ENCODE measurements at regions of chr11 and their contacts with region 1.

Region 1: DNA sequence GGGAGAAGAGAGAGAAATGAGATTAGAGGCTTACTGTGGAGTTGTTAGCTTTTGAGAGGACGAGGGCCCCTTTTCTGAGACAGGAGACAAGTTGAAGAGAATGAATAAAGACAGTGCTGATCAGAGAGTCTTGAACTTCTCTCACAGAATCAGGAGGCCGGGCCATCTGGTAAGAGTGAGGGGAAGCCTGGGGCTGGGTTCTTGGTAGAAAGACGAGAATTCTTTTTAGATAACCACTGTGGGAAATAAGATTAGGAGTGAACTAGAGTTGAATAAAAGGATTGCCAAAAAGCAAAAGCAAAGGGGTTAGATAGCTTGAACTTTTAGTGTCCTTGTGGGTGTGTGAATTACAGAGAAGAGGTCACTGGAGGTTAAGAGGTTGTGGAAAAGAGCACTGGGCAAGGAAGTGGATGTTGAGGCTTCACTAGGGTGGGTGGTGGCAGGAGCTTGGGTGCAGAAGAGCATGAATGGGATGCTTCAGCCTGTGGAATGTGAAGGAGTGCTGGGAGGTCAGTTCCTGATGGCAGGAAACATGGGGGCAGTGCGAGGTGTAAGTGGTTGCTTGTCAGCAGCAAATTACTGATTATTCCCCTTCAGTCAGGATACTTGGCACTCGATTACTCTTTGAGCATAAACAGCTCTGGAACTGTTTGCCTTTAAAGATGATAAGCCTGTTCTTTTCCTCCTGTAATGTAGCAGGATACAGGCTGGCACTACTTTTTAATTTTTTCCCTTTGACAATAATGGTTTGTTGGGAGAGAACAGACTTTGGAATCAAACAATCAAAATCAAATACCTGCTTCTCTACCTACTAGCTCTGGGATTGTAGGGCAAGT is 98.3 kb downstream of the ARHGAP42 start:
- DNase-seq: no peak
- ATAC-seq: peak; percentile 27; the same call in 1 of the 2 replicates
- H3K4me3 ChIP-seq: no peak overlapping the region
- H3K27ac ChIP-seq: no peak overlapping the region
- H3K4me1 ChIP-seq: 0 out of 2 replicates have a peak, but pooled peaks cover 1% of the 10 kb centered on the region
- H3K27me3 ChIP-seq: no peaks in the 10 kb centered on the region
- CTCF ChIP-seq: no peak
- POLR2A ChIP-seq: no peak
- RAD21 ChIP-seq: no peak

Region 2: DNA sequence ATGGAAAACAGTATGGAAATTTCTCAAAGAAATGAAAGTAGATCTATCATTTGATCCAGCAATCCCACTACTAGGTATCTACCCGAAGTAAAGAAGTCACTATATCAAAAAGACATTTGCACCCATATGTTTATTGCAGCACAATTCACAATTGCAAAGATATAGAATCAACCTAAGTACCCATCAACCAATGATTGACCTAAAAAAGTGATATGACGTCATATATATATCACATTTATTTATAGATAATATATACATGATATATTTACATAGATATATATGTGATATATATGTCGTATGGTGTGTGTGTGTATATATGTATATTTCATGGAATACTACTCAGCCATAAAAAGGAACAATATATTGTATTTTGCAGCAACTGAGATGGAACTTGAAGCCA is 286.6 kb before region 1 on chr11:
- CTCF ChIA-PET with region 1: no interaction called
- POLR2A ChIA-PET with region 1: no interaction called
- dilution Hi-C with region 1: no loop called
- in situ Hi-C with region 1: no loop called
- intact Hi-C with region 1: no loop called
- DNase-seq: no peak
- ATAC-seq: no peak
- H3K4me3 ChIP-seq: no peak overlapping the region
- H3K27ac ChIP-seq: no peak overlapping the region
- H3K4me1 ChIP-seq: no peaks in the 10 kb centered on the region
- H3K27me3 ChIP-seq: no peaks in the 10 kb centered on the region
- CTCF ChIP-seq: no peak
- POLR2A ChIP-seq: no peak
- RAD21 ChIP-seq: no peak

Region 3: GRCh38 chr11:100528872-100529416 is 256.4 kb before region 1 on chr11:
- CTCF ChIA-PET with region 1: no interaction called
- POLR2A ChIA-PET with region 1: no interaction called
- dilution Hi-C with region 1: no loop called
- in situ Hi-C with region 1: no loop called
- intact Hi-C with region 1: no loop called
- DNase-seq: no peak
- ATAC-seq: no peak
- H3K4me3 ChIP-seq: no peak overlapping the region
- H3K27ac ChIP-seq: no peak overlapping the region
- H3K4me1 ChIP-seq: no peaks in the 10 kb centered on the region
- H3K27me3 ChIP-seq: no peaks in the 10 kb centered on the region
- CTCF ChIP-seq: no peak
- POLR2A ChIP-seq: no peak
- RAD21 ChIP-seq: no peak

Region 4: DNA sequence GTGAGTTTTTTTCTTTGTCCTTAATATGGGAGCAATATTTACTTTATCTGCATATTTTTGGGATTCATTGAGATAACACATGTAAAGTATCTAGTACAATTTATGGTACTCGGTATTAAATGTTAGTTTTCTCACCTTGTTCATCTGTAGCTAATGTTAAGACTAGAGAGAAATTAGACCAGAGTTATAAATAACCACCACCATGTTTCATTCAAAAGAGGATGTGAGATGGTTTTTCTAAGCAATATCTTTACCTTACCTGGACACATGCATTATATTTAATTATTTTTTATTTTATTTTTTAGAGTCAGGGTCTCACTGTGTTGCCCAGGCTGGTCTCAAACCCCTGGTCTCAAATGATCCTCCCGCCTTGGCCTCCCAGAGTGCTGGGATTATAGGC is 79.9 kb before region 1 on chr11:
- CTCF ChIA-PET with region 1: no interaction called
- POLR2A ChIA-PET with region 1: interaction called, 17 read pairs
- dilution Hi-C with region 1: no loop called
- in situ Hi-C with region 1: no loop called
- intact Hi-C with region 1: no loop called
- DNase-seq: no peak
- ATAC-seq: no peak
- H3K4me3 ChIP-seq: no peak overlapping the region
- H3K27ac ChIP-seq: no peak overlapping the region
- H3K4me1 ChIP-seq: peaks cover 7% of the 10 kb centered on the region
- H3K27me3 ChIP-seq: no peaks in the 10 kb centered on the region
- CTCF ChIP-seq: no peak
- POLR2A ChIP-seq: no peak
- RAD21 ChIP-seq: no peak